ENCODE measurements at regions of chr19 and their contacts with region 1.

Region 1: GRCh38 chr19:48872182-48872883 is at the start of gene PPP1R15A:
- DNase-seq: peak; percentile 96 to 99
- ATAC-seq: peak; percentile 71 to 72
- H3K4me3 ChIP-seq: peak within 1 kb of the TSS; percentile 85 to 100 (median 93)
- H3K27ac ChIP-seq: peak within 1 kb of the TSS; percentile 94 to 100 (median 99)
- H3K4me1 ChIP-seq: peaks cover 33 to 41% of the 10 kb centered on the region in 2 donors
- H3K27me3 ChIP-seq: no peaks in the 10 kb centered on the region
- CTCF ChIP-seq: peak in 4 of 5 experiments; percentile 10 to 67 (median 36)
- POLR2A ChIP-seq: peak; percentile 99 to 100
- total RNA-seq, gene PPP1R15A: 28.7 to 73.9 (median 39.8) TPM

Region 2: DNA sequence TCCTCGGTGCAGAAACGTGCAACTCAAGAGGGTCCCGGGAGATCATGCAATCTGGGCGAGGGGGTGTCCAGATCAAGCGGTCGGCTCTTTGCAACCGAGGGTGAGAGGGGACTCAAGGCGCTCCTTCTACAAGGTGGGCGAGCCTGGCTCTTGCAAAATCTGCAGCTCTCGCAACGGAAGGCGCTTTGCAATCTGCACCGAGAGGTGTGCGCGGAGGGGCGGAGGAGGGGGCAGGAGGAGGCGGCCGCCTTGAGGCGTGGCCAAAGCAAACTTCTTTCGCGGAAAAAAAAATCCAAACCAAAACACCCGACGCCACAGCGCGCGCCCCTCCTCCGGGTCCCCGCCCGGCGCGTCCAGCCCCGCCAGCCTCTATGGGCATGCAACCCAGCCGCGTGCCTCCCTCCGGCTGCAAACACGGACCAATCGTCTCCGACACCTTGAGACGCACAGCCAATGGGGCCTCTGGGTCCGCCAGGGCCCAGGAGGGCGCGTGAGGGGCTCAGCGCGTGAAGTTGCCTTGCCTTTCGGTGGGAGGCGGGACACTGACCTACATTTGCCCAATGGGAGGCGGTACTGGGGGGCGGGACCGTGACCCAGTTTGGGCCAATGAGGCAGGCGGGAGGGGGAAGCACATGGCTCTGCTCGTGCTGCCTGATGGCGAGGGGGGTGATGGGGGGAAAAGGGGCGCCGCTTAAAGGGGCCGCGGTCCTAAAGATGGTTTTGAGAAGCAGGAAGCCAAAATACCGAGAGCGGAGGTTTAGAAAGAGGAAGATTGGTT is 235.0 kb before region 1 on chr19 and contains the start of gene DBP:
- in situ Hi-C with region 1: no loop called
- intact Hi-C with region 1: loop called (anchors 2 kb)
- DNase-seq: peak; percentile 99 to 100
- ATAC-seq: peak; percentile 52 to 55
- H3K4me3 ChIP-seq: peak within 1 kb of the TSS; percentile 58 to 95 (median 76)
- H3K27ac ChIP-seq: peak within 1 kb of the TSS; percentile 97 to 100 (median 100)
- H3K4me1 ChIP-seq: peaks cover 37 to 46% of the 10 kb centered on the region in 2 donors
- H3K27me3 ChIP-seq: no peaks in the 10 kb centered on the region
- CTCF ChIP-seq: peak in 1 of 5 experiments; percentile 21
- POLR2A ChIP-seq: peak; percentile 59 to 76
- total RNA-seq, gene DBP: 1.7 to 12.9 (median 4.4) TPM

Region 3: GRCh38 chr19:48713864-48714758 is 158.2 kb before region 1 on chr19:
- in situ Hi-C with region 1: no loop called
- intact Hi-C with region 1: loop called (anchors 5 kb)
- DNase-seq: peak; percentile 98 to 99
- ATAC-seq: peak; percentile 88 to 94
- H3K4me3 ChIP-seq: peak overlapping the region; percentile 47 to 65 (median 60)
- H3K27ac ChIP-seq: peak overlapping the region; percentile 88 to 98 (median 94)
- H3K4me1 ChIP-seq: peaks cover 39 to 43% of the 10 kb centered on the region in 2 donors
- H3K27me3 ChIP-seq: no peaks in the 10 kb centered on the region
- CTCF ChIP-seq: no peak
- POLR2A ChIP-seq: peak; percentile 60 to 73

Region 4: DNA sequence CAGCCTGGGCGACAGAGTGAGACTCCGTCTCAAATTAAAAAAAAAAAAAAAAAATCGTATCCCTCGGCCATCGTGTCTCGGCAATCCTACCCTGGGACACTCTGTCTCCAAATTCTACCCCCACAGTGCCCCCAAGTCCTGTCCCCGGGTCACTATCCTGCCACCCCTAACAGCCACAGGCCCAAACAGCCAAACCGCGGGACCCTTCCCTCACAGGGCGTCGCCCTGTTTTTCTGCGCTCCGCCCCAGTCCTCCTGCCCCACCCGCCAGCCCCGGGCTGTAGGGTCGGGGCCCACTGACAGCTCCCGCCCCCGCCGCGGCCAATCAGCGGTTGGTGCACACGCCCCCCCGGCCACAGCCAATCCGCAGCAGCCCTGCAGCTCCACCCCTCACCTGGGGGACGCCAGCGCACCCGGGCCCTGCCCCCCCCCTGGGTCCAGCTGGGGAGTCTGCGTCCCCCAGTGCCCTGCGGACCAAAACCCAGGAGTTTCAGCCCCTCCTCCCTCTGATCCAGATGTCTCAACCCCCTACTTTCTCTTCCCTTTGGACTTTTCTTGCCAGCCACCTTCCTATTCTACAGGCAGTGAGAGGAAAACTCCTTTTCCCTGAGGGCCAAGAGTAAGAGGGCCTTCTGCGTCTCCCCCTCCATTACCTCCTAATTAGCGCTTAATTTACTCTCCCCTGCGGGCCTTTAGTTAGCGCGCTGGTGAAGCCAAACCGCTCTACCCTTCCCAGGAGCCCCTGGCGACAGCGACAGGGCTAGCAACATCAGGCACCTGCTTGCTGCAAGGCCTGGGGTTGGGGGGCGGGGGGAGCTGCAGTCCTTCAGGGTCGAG is 60.0 kb before region 1 on chr19:
- in situ Hi-C with region 1: no loop called
- intact Hi-C with region 1: loop called (anchors 2 kb)
- DNase-seq: peak; percentile 86 to 95
- ATAC-seq: peak; percentile 59 to 62
- H3K4me3 ChIP-seq: peak overlapping the region; percentile 73 to 95 (median 80)
- H3K27ac ChIP-seq: peak overlapping the region; percentile 93 to 96 (median 94)
- H3K4me1 ChIP-seq: peaks cover 32 to 38% of the 10 kb centered on the region in 2 donors
- H3K27me3 ChIP-seq: no peaks in the 10 kb centered on the region
- CTCF ChIP-seq: no peak
- POLR2A ChIP-seq: peak; percentile 91 to 94

Region 5: DNA sequence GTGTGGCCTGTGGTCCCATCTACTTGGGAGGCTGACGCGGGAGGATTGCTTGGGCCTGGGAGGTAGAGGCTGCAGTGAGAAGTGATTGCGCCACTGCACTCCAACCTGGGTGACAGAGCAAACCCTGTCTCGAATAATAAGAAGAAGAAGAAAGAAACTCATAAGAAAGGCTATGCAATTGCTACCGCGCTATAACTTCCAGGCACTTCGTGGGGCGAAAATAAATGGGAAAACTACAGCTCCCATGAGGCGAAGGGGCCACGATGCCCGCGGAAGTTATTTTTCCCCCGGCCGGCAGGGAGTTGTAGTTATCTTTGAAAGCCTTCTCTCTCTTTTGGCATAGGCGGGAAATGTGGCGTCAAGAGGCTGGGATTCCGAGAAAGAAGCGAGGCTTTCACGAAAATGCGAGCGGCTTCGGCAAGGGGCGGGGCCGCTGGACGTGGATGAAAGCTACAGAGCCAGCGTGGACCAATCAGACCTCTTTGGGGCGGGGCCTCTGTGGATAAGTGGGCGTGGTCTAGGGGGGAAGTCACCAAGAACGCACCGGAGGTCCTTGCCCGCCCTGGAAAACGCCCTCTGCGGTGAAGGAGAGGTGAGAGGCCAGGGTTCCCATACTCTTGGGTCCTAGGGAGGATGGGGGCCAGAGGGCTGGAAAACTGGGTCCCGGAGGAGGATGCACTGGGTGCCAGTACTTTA is 27.6 kb after region 1 on chr19 and contains the start of gene NUCB1:
- in situ Hi-C with region 1: no loop called
- intact Hi-C with region 1: loop called (anchors 2 kb)
- DNase-seq: peak; percentile 97 to 98
- ATAC-seq: peak; percentile 97
- H3K4me3 ChIP-seq: peak within 1 kb of the TSS; percentile 87 to 96 (median 93)
- H3K27ac ChIP-seq: peak within 1 kb of the TSS; percentile 92 to 98 (median 95)
- H3K4me1 ChIP-seq: peaks cover 25 to 30% of the 10 kb centered on the region in 2 donors
- H3K27me3 ChIP-seq: no peaks in the 10 kb centered on the region
- CTCF ChIP-seq: peak in 1 of 5 experiments; percentile 34
- POLR2A ChIP-seq: peak; percentile 70 to 76
- total RNA-seq, gene NUCB1: 83.9 to 162 (median 148) TPM

Region 6: GRCh38 chr19:48954595-48955310 is 82.4 kb after region 1 on chr19 and contains the start of gene BAX:
- in situ Hi-C with region 1: loop called in 1 of 4 experiments (anchors 25 kb)
- intact Hi-C with region 1: loop called (anchors 5 kb)
- DNase-seq: peak; percentile 95 to 98
- ATAC-seq: peak; percentile 88 to 93
- H3K4me3 ChIP-seq: peak within 1 kb of the TSS; percentile 78 to 88 (median 84)
- H3K27ac ChIP-seq: peak within 1 kb of the TSS; percentile 72 to 88 (median 82)
- H3K4me1 ChIP-seq: peaks cover 9 to 12% of the 10 kb centered on the region in 2 donors
- H3K27me3 ChIP-seq: no peaks in the 10 kb centered on the region
- CTCF ChIP-seq: peak in 2 of 5 experiments; percentile 71 to 74
- POLR2A ChIP-seq: peak; percentile 74 to 84
- total RNA-seq, gene BAX: 7.9 to 21.8 (median 18.0) TPM

Region 7: GRCh38 chr19:48965040-48965805 is 92.9 kb after region 1 on chr19 and contains the start of gene FTL:
- in situ Hi-C with region 1: loop called in 2 of 4 experiments (anchors 10 to 25 kb)
- intact Hi-C with region 1: loop called (anchors 1 kb)
- DNase-seq: peak; percentile 97 to 98
- ATAC-seq: peak; percentile 66 to 67
- H3K4me3 ChIP-seq: peak within 1 kb of the TSS; percentile 95 to 97 (median 96)
- H3K27ac ChIP-seq: peak within 1 kb of the TSS; percentile 89 to 99 (median 98)
- H3K4me1 ChIP-seq: peaks cover 30 to 48% of the 10 kb centered on the region in 2 donors
- H3K27me3 ChIP-seq: no peaks in the 10 kb centered on the region
- CTCF ChIP-seq: no peak
- POLR2A ChIP-seq: peak; percentile 99 to 100
- total RNA-seq, gene FTL: 894 to 1,364 (median 1,121) TPM